ENCODE measurements at regions of chr14 and their contacts with region 1.

Region 1: DNA sequence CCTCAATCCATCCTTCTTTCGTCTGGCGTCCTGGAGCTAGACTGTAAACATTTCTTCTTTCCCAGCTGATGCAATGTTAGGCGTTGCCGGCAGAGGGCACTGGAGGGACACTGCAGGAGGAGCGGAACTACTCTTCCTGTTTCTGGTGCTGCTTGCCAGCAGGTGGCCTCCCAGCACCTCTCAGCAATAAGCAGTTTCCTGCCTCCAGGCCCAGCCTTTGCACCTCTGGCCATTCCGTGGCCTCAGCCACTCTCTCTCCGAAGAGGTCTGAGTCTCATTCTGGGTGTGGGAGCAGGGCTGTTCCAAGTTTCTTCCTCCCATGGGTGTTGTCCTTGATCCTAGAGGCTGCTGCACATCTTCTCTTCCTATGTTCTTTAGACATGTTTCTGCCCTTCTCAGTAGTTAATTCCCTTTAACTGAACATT is 7.5 kb upstream of the ASPG start:
- DNase-seq: peak; percentile 55 to 71
- ATAC-seq: peak; percentile 84 to 89
- H3K4me3 ChIP-seq: no peak overlapping the region
- H3K27ac ChIP-seq: no peak overlapping the region
- H3K4me1 ChIP-seq: peaks cover 0 to 4% of the 10 kb centered on the region in 2 donors
- H3K27me3 ChIP-seq: peaks cover 0 to 9% (median 5%) of the 10 kb centered on the region in 3 donors
- CTCF ChIP-seq: peak; percentile 84 to 98 (median 92)
- POLR2A ChIP-seq: no peak

Region 2: GRCh38 chr14:103984196-103984595 is 93.8 kb before region 1 on chr14:
- in situ Hi-C with region 1: no loop called
- intact Hi-C with region 1: no loop called
- DNase-seq: no peak
- ATAC-seq: no peak
- H3K4me3 ChIP-seq: no peak overlapping the region
- H3K27ac ChIP-seq: no peak overlapping the region
- H3K4me1 ChIP-seq: no peaks in the 10 kb centered on the region
- H3K27me3 ChIP-seq: peaks cover 0 to 5% (median 0%) of the 10 kb centered on the region in 3 donors
- CTCF ChIP-seq: no peak
- POLR2A ChIP-seq: no peak

Region 3: GRCh38 chr14:104096751-104097700 is 19.0 kb after region 1 on chr14:
- in situ Hi-C with region 1: no loop called
- intact Hi-C with region 1: no loop called
- DNase-seq: no peak
- ATAC-seq: no peak
- H3K4me3 ChIP-seq: no peak overlapping the region
- H3K27ac ChIP-seq: no peak overlapping the region
- H3K4me1 ChIP-seq: no peaks in the 10 kb centered on the region
- H3K27me3 ChIP-seq: peaks cover 0 to 12% (median 7%) of the 10 kb centered on the region in 3 donors
- CTCF ChIP-seq: no peak
- POLR2A ChIP-seq: no peak

Region 4: DNA sequence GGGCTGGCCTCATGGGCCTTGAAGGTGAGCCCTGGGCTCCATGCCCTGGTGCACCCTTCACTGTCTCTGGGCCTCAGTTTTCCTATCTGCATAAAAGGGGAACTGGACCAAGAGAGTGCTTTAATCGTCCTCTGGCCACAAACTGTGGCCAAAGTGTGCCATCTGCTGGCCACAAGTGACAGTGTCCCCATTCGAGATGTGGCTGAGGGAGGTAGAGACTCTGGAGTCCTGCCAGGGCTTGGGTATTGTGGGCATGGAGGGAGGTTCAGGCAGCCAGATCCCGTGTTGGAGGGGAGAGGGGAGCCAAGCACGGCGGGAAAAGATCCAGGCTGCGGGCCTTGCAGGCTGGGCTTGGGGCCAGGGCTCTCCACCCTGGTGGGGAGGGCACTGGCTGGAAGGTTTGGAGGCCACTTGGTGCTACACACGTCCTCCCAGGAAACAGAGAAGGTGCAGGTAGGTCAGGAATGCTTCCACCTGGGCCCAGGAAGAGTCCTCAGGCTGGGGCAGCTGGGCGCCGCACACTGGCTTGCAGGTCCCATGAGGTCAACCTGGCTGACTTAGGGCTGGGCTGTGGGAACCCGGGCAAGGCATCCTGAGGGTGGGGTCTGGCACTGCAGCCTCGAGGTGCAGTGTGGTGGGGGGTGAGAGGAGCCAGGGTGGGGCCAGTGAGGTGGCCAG is 53.1 kb after region 1 on chr14:
- in situ Hi-C with region 1: no loop called
- intact Hi-C with region 1: loop called (anchors 2 kb)
- DNase-seq: no peak
- ATAC-seq: no peak
- H3K4me3 ChIP-seq: no peak overlapping the region
- H3K27ac ChIP-seq: no peak overlapping the region
- H3K4me1 ChIP-seq: peaks cover 0 to 7% of the 10 kb centered on the region in 2 donors
- H3K27me3 ChIP-seq: peaks cover 15 to 37% (median 21%) of the 10 kb centered on the region in 3 donors
- CTCF ChIP-seq: peak; percentile 14 to 54 (median 46)
- POLR2A ChIP-seq: no peak

Region 5: DNA sequence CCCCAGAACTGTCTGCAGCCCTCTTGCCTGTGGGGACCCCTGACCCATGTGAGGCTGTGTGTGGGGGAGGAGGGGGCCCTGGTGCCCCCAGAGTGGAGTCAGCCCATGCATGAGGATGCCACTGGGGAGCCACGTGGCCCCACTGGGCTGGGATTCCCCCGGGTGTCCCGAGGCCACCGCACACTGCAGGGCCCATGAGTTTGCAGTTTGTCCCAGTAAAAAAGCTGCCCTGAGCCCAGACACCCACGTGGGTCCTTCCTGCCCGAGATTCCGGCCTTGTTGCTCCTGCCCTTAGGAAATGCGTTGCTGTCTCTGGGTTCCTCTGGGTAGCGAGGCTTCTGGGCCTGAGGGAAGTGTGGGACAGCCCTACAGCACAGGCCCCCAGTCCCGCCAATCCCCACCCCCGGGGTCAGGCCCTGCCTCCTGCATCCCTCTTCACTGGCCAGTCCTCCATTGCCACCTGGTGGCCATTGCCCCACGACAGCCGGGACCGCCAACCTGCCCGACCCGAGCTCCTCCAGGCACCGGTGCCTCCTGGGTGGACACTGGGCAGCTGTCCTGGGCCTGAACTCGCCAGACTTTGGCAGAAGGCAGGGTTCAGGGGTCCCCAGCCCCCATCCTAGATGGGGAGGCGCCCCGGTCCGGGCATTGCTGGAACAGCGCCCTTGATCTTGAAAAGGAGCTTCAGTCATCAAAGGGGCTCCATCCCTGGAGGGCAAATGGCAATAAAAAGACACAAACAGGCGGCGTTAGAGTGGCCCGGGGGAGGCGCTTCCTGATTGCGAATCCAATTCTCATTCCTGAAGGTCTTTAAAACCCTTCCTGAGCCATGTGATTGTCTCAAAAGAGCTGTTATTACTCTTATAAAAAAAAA is 485.9 kb after region 1 on chr14:
- in situ Hi-C with region 1: no loop called
- intact Hi-C with region 1: loop called (anchors 5 kb)
- DNase-seq: peak in 1 of 2 donors; percentile 37
- ATAC-seq: peak; percentile 62 to 78
- H3K4me3 ChIP-seq: no peak overlapping the region
- H3K27ac ChIP-seq: no peak overlapping the region
- H3K4me1 ChIP-seq: no peaks in the 10 kb centered on the region
- H3K27me3 ChIP-seq: peaks cover 2 to 17% (median 5%) of the 10 kb centered on the region in 3 donors
- CTCF ChIP-seq: peak; percentile 63 to 89 (median 81)
- POLR2A ChIP-seq: no peak

Measured in gastrocnemius medialis (tissue), 4 donors.